ENCODE measurements at regions of chr11 and their contacts with region 1.

Region 1: DNA sequence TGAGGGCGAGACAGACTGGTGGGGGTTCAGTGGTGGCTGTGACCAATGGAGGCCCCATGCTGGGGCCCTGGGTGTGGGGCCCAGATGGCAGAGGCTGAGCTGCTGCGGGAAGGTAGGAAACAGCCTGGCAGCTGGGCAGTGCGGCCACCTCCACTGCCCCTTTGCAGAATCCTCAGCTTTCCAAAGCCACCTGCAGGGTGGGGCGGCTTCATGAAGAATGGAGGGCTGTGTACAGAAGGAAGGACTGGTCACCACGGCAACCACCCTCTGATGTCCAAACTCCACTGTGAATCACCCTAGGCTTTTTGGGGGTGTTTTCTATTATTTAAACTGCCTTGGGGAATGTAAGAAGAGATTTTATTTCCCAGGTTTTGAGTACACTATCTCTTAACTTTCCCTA is 166.3 kb upstream of the NAV2 start:
- DNase-seq: no peak
- H3K4me3 Mint-ChIP-seq: no peak overlapping the region
- H3K27ac Mint-ChIP-seq: no peak overlapping the region
- H3K4me1 Mint-ChIP-seq: no peaks in the 10 kb centered on the region
- H3K27me3 Mint-ChIP-seq: peaks cover 98% of the 10 kb centered on the region
- CTCF ChIP-seq: no peak

Region 2: DNA sequence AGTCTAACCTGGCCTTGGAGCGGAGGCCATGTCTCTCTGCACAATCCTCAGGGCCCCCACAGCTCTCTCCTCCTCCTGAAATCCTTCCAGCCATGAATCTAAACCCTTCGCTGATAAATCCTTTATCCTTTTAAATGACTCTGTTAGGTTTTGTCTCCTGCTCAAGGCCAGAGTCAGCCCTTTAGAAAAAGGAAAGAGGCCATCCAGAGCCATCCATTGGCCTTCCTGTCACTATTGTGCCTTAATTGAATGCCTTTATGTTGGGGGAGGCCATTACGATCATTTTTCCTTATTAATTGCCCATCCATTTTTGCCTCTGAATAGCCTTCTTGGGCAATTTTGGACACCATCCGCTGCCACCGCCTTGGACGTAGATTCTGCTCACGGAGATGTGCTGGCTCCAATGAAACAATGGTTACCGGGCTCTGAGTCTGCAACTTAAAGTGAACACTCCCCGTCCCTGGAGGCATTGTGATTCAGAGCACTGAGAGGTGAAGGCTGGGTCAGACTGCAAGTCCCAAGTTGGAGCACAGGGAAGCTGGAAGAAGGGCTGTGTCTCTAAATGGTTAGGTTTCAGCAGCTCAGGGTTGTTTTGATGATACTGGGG is 92.6 kb before region 1 on chr11:
- CTCF ChIA-PET with region 1: no interaction called
- POLR2A ChIA-PET with region 1: no interaction called
- intact Hi-C with region 1: loop called (anchors 10 kb)
- DNase-seq: peak; percentile 79
- H3K4me3 Mint-ChIP-seq: no peak overlapping the region
- H3K27ac Mint-ChIP-seq: no peak overlapping the region
- H3K4me1 Mint-ChIP-seq: peaks cover 6% of the 10 kb centered on the region
- H3K27me3 Mint-ChIP-seq: peaks cover 32% of the 10 kb centered on the region
- CTCF ChIP-seq: no peak

Region 3: GRCh38 chr11:19595840-19596751 is 49.8 kb after region 1 on chr11:
- CTCF ChIA-PET with region 1: no interaction called
- POLR2A ChIA-PET with region 1: no interaction called
- intact Hi-C with region 1: no loop called
- DNase-seq: peak; percentile 94
- H3K4me3 Mint-ChIP-seq: peak overlapping the region; percentile 23
- H3K27ac Mint-ChIP-seq: peak overlapping the region; percentile 92
- H3K4me1 Mint-ChIP-seq: peaks cover 39% of the 10 kb centered on the region
- H3K27me3 Mint-ChIP-seq: no peaks in the 10 kb centered on the region
- CTCF ChIP-seq: no peak

Measured in MCF 10A (cell line).